Right ventricle myocardium superior (tissue), 1 donor: ENCODE measurements at regions of chr9 and their contacts with region 1.

Region 1: DNA sequence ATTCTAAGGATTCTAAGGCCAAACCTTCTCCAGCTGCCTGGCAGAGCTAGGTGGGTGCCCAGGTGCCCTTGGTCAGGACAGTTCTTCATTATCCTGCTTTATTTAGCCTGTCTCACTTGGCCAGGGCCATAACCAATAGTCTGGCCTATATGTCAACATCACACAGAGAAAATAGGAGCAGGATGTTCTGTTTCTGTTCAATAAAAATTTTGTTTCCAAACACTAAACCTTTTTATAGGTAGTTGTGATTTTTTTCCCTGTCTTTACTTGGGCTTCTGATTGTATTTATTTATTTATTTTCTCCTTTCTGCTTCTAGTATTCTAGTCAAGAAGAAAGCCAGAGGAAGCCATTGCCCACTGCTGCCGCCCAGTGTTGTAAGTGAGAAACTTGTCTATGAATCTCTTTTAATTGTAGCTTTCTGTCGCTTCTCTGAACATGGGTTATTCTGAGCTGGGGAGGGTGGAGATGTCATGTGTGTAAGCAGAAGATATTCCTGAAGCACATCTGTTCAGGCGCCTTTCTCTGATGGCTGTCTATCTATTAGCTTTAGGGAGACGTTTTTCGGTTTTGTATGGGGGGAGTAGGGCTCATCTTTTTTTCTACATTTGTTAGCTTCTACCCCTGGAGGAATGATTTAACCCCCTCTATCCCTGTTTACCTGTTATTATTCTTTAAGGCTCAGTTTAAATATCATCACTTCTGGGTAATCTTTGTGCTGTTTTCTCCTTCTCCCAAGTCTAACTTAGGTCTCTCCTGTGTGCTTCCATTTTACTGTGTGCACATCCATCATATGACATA is 97.1 kb downstream of the UNC13B start:
- DNase-seq: peak; percentile 79
- ATAC-seq: peak; percentile 79

Region 2: GRCh38 chr9:34428325-34428958 is 830.4 kb before region 1 on chr9:
- intact Hi-C with region 1: no loop called
- DNase-seq: no peak
- ATAC-seq: no peak

Region 3: DNA sequence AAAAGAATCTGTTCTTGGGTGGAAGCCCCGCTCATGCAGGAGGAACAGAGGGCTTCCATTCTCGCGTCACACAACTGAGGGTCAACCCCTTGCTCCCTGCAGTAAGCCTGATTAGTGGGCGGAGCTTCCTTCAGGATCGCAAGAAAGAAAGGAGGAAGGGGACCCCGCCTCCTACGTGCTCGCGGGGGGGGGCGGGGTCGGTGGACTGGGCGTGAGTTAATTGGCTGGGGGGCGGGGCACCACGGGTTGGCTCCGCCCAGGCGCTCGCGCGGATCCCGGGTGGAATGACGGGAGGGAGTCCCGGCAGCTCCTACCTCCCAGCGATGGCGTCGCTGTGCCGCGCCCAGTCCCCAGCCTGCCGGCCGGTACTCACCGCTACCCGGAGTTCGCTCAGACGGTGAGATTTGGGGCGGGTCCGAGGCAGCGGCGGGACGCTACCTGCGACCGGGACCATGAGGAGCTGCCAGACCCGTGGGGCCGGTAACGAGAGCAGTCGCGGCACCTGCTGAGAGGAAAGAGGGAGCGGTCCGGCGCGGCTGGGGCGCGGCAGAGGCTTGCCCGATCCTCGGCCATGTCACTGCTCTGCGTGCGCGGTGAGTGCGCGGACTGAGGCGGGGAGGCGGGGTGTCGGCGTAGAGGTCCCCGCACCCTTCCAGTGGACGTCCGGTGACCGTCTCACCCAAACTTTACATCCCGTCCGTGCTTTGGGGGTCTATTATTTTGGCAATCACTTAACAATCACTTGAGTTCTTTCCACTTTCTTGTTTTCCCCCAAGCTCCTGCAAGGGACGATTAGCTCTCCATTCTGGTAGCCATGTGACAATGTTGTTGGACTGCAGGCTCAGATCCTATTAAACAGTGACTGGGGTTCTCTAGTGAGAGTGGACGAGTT is 96.9 kb before region 1 on chr9 and contains the start of gene UNC13B:
- intact Hi-C with region 1: loop called (anchors 10 kb)
- DNase-seq: peak; percentile 97
- ATAC-seq: peak; percentile 99
- total RNA-seq, gene UNC13B: 20.9 TPM